ENCODE measurements at regions of chr9 and their contacts with region 1.

Region 1: GRCh38 chr9:75148561-75148960 is 60.2 kb downstream of the OSTF1 start:
- DNase-seq: peak; percentile 80
- H3K4me3 Mint-ChIP-seq: peak overlapping the region; percentile 62
- H3K27ac Mint-ChIP-seq: peak overlapping the region; percentile 85
- H3K4me1 Mint-ChIP-seq: peaks cover 63% of the 10 kb centered on the region
- H3K27me3 Mint-ChIP-seq: no peaks in the 10 kb centered on the region

Region 2: DNA sequence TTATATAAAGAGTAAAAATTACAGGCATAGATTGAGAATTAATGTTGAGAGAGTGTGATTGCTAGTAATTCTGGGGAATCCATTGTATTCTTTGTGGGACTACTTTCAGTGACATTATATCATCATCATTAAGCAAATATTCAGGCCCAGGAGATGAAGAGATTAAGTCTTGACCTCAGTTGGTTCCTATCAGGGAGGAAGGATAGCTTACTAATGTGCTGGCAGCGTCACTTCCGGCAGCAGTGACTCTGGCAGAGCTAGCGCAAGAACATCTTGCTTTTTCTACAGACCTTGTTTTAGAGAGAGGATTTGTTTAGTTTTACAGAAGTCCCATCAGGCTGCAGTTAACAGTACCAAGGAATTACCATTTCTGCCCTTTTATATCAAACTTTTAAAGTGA is 40.0 kb before region 1 on chr9:
- intact Hi-C with region 1: no loop called
- DNase-seq: no peak
- H3K4me3 Mint-ChIP-seq: no peak overlapping the region
- H3K27ac Mint-ChIP-seq: peak overlapping the region; percentile 42
- H3K4me1 Mint-ChIP-seq: peaks cover 33% of the 10 kb centered on the region
- H3K27me3 Mint-ChIP-seq: no peaks in the 10 kb centered on the region

Region 3: DNA sequence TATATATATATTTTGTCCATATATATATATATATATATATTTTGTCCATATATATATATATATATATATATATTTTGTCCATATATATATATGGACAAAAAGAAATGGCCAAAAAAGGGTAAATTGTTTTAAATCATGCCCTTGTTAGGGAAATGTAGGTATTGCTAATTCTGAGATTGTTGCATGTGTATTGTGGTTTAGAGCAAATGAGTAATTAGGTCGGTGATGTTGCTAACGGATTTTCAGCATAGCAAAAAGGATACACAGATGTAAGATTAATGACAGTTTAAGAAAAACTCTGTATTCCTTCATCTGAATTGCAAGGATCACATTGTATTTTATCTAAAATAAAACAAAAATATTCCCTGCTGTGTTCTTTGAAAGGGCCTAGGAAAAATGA is 20.0 kb before region 1 on chr9:
- intact Hi-C with region 1: loop called (anchors 2 kb)
- DNase-seq: no peak
- H3K4me3 Mint-ChIP-seq: no peak overlapping the region
- H3K27ac Mint-ChIP-seq: peak overlapping the region; percentile 52
- H3K4me1 Mint-ChIP-seq: peaks cover 35% of the 10 kb centered on the region
- H3K27me3 Mint-ChIP-seq: no peaks in the 10 kb centered on the region

Region 4: DNA sequence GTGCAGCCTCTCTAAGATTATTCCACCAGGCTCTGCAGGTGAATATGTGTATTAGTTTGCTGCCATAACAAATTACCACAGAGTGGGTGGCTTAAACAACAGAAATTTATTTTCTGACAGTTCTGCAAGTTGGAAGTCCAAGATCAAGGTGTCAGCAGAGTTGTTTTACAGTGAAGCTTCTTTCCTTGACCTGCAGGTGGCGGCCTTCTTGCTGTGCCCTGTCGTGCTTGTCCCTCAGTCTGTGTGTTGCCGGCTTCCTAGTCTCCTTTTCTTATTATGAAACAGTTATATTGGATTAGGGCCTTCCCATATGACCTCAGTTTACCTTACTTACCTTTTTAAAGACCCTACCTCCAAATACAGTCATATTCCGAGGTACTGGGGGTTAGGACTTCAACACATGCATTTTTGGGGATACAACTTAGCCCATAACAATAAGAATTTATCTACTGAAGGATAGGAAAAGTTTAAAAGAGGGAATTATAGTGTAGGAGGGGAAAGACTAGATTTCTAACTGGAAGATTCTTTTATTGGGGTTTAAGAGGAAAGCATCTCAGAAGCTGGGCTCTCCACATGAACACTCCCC is 37.1 kb after region 1 on chr9:
- intact Hi-C with region 1: loop called (anchors 5 kb)
- DNase-seq: peak; percentile 82
- H3K4me3 Mint-ChIP-seq: no peak overlapping the region
- H3K27ac Mint-ChIP-seq: no peak overlapping the region
- H3K4me1 Mint-ChIP-seq: peaks cover 9% of the 10 kb centered on the region
- H3K27me3 Mint-ChIP-seq: peaks cover under 1% of the 10 kb centered on the region

Region 5: GRCh38 chr9:76369583-76369982 is 1221.0 kb after region 1 on chr9:
- intact Hi-C with region 1: no loop called
- DNase-seq: no peak
- H3K4me3 Mint-ChIP-seq: no peak overlapping the region
- H3K27ac Mint-ChIP-seq: no peak overlapping the region
- H3K4me1 Mint-ChIP-seq: no peaks in the 10 kb centered on the region
- H3K27me3 Mint-ChIP-seq: no peaks in the 10 kb centered on the region